ENCODE measurements at regions of chr5 and their contacts with region 1.

Region 1: DNA sequence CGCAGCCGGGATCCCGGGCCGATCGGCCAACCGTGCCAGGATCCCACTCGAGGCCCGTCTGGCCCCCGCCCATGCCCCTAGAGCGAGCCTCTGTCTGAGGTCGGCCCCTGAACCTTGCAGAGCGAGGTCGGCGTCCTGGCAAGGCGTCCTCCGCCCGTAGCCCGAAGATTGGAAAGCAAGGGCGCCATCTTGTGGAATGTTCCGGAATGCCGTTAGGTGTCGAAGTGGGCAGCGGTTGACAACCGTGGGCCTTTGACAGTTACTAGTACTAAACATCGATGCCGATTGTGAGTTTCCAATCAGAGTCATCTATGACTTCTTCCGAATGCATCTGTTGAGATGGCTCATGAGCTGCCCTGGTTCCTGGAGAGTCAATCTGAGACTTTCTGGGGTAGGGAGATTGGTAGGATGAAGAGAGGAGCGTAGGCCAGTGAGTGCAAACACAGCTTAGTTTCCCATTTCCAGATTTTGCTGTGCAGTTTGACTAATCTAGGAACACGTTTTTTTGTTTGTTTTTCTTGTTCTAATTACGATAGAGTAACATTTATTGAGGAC is 923 bp upstream of the PLK2 start:
- DNase-seq: peak; percentile 94 to 97
- ATAC-seq: peak; percentile 93
- H3K4me3 ChIP-seq: peak overlapping the region; percentile 38 to 48
- H3K27ac ChIP-seq: peak overlapping the region; percentile 71 to 89
- H3K4me1 ChIP-seq: no peaks in the 10 kb centered on the region
- H3K27me3 ChIP-seq: no peaks in the 10 kb centered on the region

Region 2: DNA sequence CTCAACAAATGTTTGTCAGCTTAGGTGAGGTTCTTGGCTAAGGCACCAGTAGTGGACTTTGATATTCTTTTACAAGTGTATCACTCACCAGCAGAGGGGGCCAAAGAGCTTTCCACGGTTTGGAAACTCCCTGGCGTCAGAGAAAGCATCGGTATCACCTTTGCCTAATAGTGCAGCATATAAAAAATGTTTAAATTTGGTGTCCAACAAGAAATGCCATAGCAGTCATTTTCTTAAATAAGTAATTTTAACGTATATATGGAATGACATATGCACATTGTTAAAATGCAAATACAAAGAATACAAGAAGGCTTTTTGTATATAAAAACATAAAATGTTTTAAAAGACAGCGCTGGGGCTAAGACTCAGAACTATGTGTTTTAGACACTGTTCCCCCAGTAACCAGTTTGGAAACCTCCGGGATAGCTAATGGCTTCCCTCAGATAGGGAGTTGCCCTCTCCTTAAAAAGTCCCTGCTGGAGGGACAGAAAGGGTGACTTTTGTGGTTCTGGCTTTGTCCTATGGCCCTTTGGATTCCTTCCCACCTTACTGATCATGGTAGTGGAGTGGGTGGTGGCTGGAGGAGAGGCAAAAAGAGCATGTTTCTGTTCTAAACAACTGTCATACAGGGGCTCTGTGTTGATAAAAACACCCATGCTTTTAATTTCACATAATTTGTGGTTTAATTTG is 1162.4 kb before region 1 on chr5:
- intact Hi-C with region 1: loop called (anchors 1 kb)
- DNase-seq: peak; percentile 85 to 86
- ATAC-seq: peak; percentile 93
- H3K4me3 ChIP-seq: no peak overlapping the region
- H3K27ac ChIP-seq: peak overlapping the region in 1 of 2 donors; percentile 30
- H3K4me1 ChIP-seq: peaks cover 0 to 3% of the 10 kb centered on the region in 2 donors
- H3K27me3 ChIP-seq: no peaks in the 10 kb centered on the region

Region 3: GRCh38 chr5:57650360-57651069 is 810.3 kb before region 1 on chr5:
- intact Hi-C with region 1: loop called in 1 of 2 experiments (anchors 10 kb)
- DNase-seq: no peak
- ATAC-seq: peak; percentile 36
- H3K4me3 ChIP-seq: no peak overlapping the region
- H3K27ac ChIP-seq: no peak overlapping the region
- H3K4me1 ChIP-seq: no peaks in the 10 kb centered on the region
- H3K27me3 ChIP-seq: no peaks in the 10 kb centered on the region

Region 4: DNA sequence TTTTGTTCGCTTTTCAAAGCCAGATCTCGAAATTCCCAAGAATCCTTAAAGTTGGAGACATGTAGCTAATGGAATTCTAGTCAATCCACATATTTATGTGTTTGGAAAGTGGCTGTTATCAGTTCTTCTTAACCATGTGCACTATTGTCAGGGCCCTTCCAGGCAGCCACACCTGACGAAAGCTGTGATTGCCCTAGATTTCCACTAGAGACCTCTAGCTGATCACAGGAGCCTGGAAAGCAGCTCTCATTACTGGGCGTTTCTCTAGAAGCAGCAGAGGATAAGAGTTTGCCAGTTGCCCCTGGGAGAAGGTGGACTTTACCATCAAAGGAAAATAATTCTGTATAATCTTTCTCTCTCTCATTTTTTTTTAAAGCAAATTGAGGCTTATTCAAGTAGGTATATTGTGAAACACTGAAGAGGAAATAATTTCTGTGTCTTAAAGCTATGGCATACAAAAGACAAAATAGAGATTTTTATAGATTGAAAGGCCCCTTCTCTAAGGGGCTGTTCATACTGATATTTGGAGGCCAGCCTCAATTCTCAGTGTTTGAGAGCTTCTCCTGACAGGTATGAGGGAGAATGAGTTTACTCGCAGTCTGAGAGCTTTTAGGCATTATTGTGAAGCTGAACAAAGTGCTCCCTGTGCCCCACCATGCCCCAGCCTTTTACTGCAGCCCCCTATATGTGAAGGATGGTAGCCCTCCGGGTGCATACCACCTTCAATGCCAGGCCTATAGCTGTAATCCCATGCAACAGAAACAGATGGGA is 572.8 kb before region 1 on chr5:
- intact Hi-C with region 1: loop called (anchors 1 to 2 kb)
- DNase-seq: peak in 1 of 2 donors; percentile 41
- ATAC-seq: no peak
- H3K4me3 ChIP-seq: no peak overlapping the region
- H3K27ac ChIP-seq: no peak overlapping the region
- H3K4me1 ChIP-seq: peaks cover 0 to 3% of the 10 kb centered on the region in 2 donors
- H3K27me3 ChIP-seq: no peaks in the 10 kb centered on the region

Region 5: GRCh38 chr5:57965351-57965750 is 495.5 kb before region 1 on chr5:
- intact Hi-C with region 1: no loop called
- DNase-seq: no peak
- ATAC-seq: no peak
- H3K4me3 ChIP-seq: no peak overlapping the region
- H3K27ac ChIP-seq: no peak overlapping the region
- H3K4me1 ChIP-seq: no peaks in the 10 kb centered on the region
- H3K27me3 ChIP-seq: no peaks in the 10 kb centered on the region

Region 6: DNA sequence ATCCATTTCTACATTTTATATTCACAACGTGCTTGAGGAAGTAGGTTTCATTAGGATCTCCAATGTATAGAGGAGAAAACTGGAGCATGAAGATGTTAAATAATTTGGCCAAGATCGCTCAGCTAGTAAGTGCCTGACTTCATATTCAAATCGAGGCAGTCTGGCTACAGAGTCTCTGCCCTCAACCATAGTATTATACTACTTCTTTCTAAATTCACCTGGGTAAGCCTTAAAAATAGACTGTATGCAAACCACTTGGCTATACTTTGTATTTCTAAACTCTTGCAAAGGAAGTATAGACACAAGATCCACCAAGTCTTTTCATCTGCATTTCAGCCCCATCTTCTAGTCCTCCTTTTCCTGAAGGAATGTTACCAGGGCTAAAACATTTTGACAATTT is 233.0 kb before region 1 on chr5:
- intact Hi-C with region 1: loop called in 1 of 2 experiments (anchors 2 kb)
- DNase-seq: no peak
- ATAC-seq: no peak
- H3K4me3 ChIP-seq: no peak overlapping the region
- H3K27ac ChIP-seq: peak overlapping the region in 1 of 2 donors; percentile 57
- H3K4me1 ChIP-seq: peaks cover 4 to 5% of the 10 kb centered on the region in 2 donors
- H3K27me3 ChIP-seq: no peaks in the 10 kb centered on the region

Region 7: DNA sequence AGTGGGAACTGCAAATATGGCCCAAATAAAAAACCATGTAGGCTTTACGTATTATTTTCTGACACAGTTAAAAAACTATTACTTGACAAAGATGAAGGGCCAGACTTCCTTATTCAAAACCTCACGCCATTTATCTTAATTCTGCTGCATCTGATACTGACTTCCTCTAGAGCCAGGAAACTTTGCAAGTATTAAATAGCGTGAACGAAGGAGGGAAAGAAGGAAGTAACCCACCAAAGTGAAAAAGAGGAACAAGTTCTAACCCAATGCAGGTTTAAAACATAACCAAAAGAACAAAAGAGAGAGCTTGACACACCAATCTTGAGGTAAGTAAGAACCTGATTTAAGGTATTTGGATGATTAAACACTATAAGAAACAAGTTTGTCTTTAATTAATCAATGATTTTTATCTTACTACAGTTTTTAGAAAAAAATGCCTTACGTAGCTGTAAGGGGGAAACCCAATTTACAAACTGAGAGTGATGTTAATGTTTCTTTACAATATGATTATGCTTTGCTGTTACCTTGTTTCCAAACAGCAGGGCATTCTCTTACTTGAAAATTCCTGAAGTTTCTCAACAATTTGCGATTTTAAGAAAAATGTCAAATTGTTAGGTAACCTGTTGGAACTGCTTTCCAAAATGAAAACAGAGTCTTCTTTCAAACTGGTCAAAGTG is 30.5 kb after region 1 on chr5 and contains the start of gene GAPT:
- intact Hi-C with region 1: no loop called
- DNase-seq: no peak
- ATAC-seq: no peak
- H3K4me3 ChIP-seq: no peak within 1 kb of the TSS
- H3K27ac ChIP-seq: no peak within 1 kb of the TSS
- H3K4me1 ChIP-seq: no peaks in the 10 kb centered on the region
- H3K27me3 ChIP-seq: no peaks in the 10 kb centered on the region
- total RNA-seq, gene GAPT: 1.9 to 2.8 TPM

Measured in aorta (tissue), 5 donors.